Activated naive CD4-positive, alpha-beta T cell treated with anti-CD3 and anti-CD28 coated beads, Interleukin-2, amount 10 ng/mL, durations not matched to agents 7 days and 5 days (primary cell): ENCODE measurements at regions of chr4 and their contacts with region 1.

Region 1: GRCh38 chr4:1130316-1131186 is 17.2 kb upstream of the RNF212 start:
- DNase-seq: peak; percentile 83
- H3K4me3 Mint-ChIP-seq: no peak overlapping the region
- H3K27ac Mint-ChIP-seq: no peak overlapping the region
- H3K4me1 Mint-ChIP-seq: peaks cover 2% of the 10 kb centered on the region
- H3K27me3 Mint-ChIP-seq: peaks cover 36% of the 10 kb centered on the region

Region 2: GRCh38 chr4:1266881-1267763 is 136.6 kb after region 1 on chr4:
- CTCF ChIA-PET with region 1: interaction called, 38 read pairs
- DNase-seq: no peak
- H3K4me3 Mint-ChIP-seq: peak overlapping the region; percentile 69
- H3K27ac Mint-ChIP-seq: peak overlapping the region; percentile 99
- H3K4me1 Mint-ChIP-seq: peaks cover 21% of the 10 kb centered on the region
- H3K27me3 Mint-ChIP-seq: no peaks in the 10 kb centered on the region

Region 3: DNA sequence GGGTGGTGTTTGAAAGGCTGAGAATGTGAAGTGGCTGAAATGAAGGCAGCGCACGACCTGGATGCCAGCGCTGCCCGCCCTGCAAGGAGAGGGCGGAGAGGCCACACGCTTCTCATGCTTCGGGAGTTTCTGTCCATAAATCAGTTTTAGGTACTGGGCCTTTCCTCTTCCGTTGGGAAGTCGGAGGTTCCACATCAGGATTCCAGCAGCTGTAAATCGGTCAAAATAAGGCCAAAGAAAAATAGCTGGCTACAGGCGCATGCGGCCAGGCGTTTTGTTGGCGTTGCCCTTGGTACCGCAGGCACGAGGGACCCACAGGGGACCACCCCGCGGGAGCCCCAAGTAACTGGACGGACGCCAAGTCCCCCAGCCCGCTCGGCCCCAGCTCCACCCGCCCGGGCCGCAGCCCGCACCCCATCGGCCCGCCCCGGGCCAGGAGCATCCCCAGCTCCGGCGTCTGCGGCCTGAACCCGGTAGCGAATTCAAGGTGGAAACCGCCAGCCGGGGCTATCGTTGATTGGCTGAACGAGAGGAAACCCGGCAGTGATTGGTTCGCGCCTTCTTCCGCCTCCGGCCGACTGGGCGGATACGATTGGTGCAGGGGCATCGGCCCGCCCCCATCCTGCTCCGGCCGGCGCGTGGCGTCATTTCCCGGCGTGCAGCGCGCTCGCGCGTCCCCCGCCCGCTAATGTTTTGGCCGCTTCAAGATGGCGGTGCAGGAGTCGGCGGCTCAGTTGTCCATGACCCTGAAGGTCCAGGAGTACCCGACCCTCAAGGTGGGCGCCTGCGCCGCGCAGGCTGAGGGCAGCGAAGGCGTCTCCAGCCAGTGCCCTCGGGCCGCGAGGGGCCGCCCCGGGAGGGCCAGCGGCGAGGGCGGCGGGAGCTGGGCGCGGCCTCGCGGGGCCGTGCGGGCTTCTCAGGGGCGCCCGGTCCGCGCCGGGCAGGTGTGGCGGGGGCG is 158.9 kb after region 1 on chr4 and contains the start of gene MAEA:
- CTCF ChIA-PET with region 1: interaction called, 52 read pairs
- DNase-seq: peak; percentile 98
- H3K4me3 Mint-ChIP-seq: peak within 1 kb of the TSS; percentile 96
- H3K27ac Mint-ChIP-seq: peak within 1 kb of the TSS; percentile 92
- H3K4me1 Mint-ChIP-seq: peaks cover 37% of the 10 kb centered on the region
- H3K27me3 Mint-ChIP-seq: no peaks in the 10 kb centered on the region

Region 4: DNA sequence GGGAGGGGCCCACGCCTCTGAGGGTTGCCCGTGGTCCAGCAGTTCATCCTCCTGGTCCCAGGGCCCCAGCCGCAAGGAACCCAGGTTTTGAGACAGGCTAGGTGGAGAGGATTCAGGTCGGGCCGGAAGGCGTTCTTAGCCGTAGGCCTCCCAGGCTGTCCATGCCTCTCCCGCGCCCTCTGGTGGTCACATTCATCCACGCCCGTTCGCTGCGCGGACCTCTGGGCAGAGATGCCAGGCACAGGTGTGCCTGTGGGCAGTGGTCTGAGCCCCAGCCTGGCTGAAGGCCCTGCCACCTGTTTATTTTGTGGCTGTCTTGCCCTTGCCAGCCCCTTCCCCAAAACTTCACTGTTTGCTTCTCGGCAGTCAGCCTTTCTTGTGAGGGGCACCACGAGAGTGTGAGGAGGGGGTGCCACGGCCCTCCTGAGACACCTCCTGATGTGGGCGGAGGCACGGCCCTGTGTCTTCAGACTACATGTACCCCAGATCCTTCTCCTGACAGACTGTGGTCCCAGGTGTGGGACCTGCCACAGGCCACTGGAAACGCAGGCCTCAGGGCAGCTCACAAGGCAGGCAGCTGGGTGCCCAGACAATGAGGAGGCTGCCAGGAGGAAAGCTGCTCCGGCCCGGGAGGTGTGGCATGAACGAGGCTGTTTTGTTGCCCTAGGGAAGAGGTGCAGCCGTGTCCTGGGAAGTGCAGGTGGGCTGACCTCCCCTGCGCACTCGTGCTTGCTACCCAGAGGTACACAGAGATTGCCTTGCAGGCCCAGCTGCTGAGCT is 221.5 kb after region 1 on chr4:
- CTCF ChIA-PET with region 1: interaction called, 17 read pairs
- DNase-seq: peak; percentile 93
- H3K4me3 Mint-ChIP-seq: no peak overlapping the region
- H3K27ac Mint-ChIP-seq: peak overlapping the region; percentile 82
- H3K4me1 Mint-ChIP-seq: peaks cover 32% of the 10 kb centered on the region
- H3K27me3 Mint-ChIP-seq: no peaks in the 10 kb centered on the region